Spleen (tissue), 13 donors: ENCODE measurements at regions of chr9 and their contacts with region 1.

Region 1: GRCh38 chr9:98207606-98208005 is 15.2 kb upstream of the CORO2A start:
- DNase-seq: no peak
- H3K4me3 ChIP-seq: no peak overlapping the region
- H3K27ac ChIP-seq: no peak overlapping the region
- H3K4me1 ChIP-seq: peaks cover 0 to 14% (median 6%) of the 10 kb centered on the region in 6 donors
- H3K27me3 ChIP-seq: no peaks in the 10 kb centered on the region
- CTCF ChIP-seq: no peak
- POLR2A ChIP-seq: no peak

Region 2: GRCh38 chr9:98255578-98256296 is 48.1 kb after region 1 on chr9 and contains the start of gene TBC1D2:
- intact Hi-C with region 1: loop called (anchors 10 kb)
- DNase-seq: peak; percentile 99
- H3K4me3 ChIP-seq: peak within 1 kb of the TSS; percentile 74 to 95 (median 89)
- H3K27ac ChIP-seq: peak within 1 kb of the TSS; percentile 97 to 99 (median 99)
- H3K4me1 ChIP-seq: peaks cover 0 to 62% (median 36%) of the 10 kb centered on the region in 6 donors
- H3K27me3 ChIP-seq: no peaks in the 10 kb centered on the region
- CTCF ChIP-seq: peak in 5 of 11 experiments; percentile 26 to 52 (median 34)
- POLR2A ChIP-seq: peak in 2 of 3 donors; percentile 46 to 71
- total RNA-seq, gene TBC1D2: 10.7 to 27.2 (median 13.0) TPM